OCI-LY7 (cell line): ENCODE measurements at regions of chr3 and their contacts with region 1.

Region 1: DNA sequence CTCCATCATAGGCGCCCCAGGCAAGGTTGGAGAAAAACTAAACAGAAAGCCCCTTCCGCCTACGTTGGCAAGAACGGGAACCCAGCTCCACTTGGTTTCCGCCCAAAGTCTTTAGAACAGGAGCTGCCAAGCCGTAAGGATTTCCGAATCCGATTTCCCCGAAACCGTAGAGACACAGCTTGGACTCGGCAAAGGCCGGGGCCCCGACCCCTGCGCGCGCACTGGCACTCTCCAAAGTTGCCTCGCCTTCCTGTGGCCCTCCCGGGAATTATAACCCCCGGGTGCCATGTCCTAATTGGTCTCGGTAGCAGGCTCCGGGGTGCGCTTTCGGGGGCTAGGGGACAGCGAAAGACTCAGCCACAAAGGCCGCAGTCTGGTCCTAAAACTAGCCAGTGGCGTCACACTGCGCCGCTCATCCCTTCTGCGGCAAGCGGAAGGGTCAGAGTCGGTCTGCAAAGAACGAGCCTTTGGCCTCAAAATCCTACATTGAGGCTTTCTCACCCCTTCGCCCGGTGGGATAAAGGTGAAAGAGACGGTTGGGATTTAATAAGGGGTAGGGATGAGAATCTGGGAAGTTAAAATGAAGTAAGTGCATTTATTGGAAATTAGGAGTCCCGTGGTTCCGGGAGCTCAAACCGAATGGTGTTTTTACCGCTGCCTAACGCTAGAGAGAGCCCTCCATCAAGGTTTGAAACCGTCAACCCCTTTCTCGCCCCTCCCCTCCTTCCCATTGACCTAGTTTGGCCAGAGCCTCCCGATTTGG is 6.8 kb downstream of the BCL6 start:
- DNase-seq: peak; percentile 76
- H3K4me3 ChIP-seq: peak overlapping the region; percentile 86
- H3K27ac ChIP-seq: peak overlapping the region; percentile 90
- H3K4me1 ChIP-seq: peaks cover 60% of the 10 kb centered on the region
- CTCF ChIP-seq: peak; percentile 86

Region 2: GRCh38 chr3:188154014-188154808 is 415.7 kb after region 1 on chr3 and contains the start of gene LPP:
- CTCF ChIA-PET with region 1: no interaction called
- POLR2A ChIA-PET with region 1: no interaction called
- intact Hi-C with region 1: loop called (anchors 2 kb)
- DNase-seq: peak; percentile 79
- H3K4me3 ChIP-seq: peak within 1 kb of the TSS; percentile 82
- H3K27ac ChIP-seq: peak within 1 kb of the TSS; percentile 41
- H3K4me1 ChIP-seq: peaks cover 35% of the 10 kb centered on the region
- CTCF ChIP-seq: no peak; the same call in 1 of the 2 replicates
- total RNA-seq, gene LPP: 7.4 and 10.9 TPM in 2 replicates

Region 3: GRCh38 chr3:188234132-188234531 is 495.6 kb after region 1 on chr3:
- CTCF ChIA-PET with region 1: interaction called, 4 read pairs
- POLR2A ChIA-PET with region 1: no interaction called
- intact Hi-C with region 1: loop called (anchors 1 kb)
- DNase-seq: no peak
- H3K4me3 ChIP-seq: no peak overlapping the region
- H3K27ac ChIP-seq: no peak overlapping the region
- H3K4me1 ChIP-seq: peaks cover 77% of the 10 kb centered on the region
- CTCF ChIP-seq: no peak

Region 4: DNA sequence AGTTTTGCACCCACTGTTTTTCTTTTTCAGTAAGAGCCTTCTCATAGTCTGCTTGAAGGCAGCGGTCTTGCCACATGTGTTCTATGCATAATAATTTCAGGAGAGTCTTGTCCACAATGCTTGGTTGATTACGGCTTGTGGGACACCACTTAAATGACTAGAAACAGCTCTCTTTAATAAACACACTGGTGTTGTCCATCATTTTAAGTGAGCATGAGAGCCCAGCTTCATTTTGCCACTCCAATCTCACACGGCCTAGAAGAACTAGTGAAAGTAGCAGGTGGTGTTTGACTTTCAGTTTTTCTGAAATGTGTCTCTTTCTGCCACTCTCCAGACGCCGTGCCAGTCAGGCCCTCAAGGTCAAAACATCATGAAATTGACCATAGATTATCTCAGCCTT is 707.5 kb after region 1 on chr3:
- CTCF ChIA-PET with region 1: interaction called, 3 read pairs
- POLR2A ChIA-PET with region 1: no interaction called
- intact Hi-C with region 1: loop called (anchors 2 kb)
- DNase-seq: peak; percentile 90
- H3K4me3 ChIP-seq: peak overlapping the region; percentile 46
- H3K27ac ChIP-seq: peak overlapping the region; percentile 88
- H3K4me1 ChIP-seq: peaks cover 48% of the 10 kb centered on the region
- CTCF ChIP-seq: no peak

Region 5: DNA sequence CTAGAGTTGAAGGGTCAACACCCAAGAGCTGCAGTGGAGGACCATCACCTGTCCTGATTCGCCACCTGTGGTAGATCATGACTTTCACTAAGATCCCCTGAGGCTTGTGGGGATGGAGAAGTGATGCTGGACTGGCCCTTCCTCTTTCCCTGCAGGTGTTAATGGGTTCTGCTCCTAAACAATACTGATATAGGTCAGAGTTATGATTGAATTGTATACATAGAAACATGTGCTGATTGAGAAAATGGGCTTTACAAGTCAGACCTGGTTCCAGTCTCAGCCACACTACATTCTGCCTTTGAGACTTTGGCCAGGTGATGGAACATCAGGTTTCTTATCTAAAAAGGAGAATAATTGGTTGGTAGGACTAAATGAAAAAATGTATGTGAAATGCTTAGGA is 1014.3 kb after region 1 on chr3:
- CTCF ChIA-PET with region 1: interaction called, 3 read pairs
- POLR2A ChIA-PET with region 1: interaction called, 3 read pairs
- intact Hi-C with region 1: loop called (anchors 2 kb)
- DNase-seq: peak; percentile 76
- H3K4me3 ChIP-seq: peak overlapping the region; percentile 54
- H3K27ac ChIP-seq: peak overlapping the region; percentile 89
- H3K4me1 ChIP-seq: peaks cover 68% of the 10 kb centered on the region
- CTCF ChIP-seq: no peak

Region 6: GRCh38 chr3:189041482-189042090 is 1303.1 kb after region 1 on chr3:
- CTCF ChIA-PET with region 1: no interaction called
- POLR2A ChIA-PET with region 1: no interaction called
- intact Hi-C with region 1: loop called (anchors 10 kb)
- DNase-seq: peak; percentile 70
- H3K4me3 ChIP-seq: no peak overlapping the region
- H3K27ac ChIP-seq: no peak overlapping the region
- H3K4me1 ChIP-seq: peaks cover 4% of the 10 kb centered on the region
- CTCF ChIP-seq: peak; percentile 83